Dorsolateral prefrontal cortex (tissue), 120 donors: ENCODE measurements at regions of chr16 and their contacts with region 1.

Region 1: DNA sequence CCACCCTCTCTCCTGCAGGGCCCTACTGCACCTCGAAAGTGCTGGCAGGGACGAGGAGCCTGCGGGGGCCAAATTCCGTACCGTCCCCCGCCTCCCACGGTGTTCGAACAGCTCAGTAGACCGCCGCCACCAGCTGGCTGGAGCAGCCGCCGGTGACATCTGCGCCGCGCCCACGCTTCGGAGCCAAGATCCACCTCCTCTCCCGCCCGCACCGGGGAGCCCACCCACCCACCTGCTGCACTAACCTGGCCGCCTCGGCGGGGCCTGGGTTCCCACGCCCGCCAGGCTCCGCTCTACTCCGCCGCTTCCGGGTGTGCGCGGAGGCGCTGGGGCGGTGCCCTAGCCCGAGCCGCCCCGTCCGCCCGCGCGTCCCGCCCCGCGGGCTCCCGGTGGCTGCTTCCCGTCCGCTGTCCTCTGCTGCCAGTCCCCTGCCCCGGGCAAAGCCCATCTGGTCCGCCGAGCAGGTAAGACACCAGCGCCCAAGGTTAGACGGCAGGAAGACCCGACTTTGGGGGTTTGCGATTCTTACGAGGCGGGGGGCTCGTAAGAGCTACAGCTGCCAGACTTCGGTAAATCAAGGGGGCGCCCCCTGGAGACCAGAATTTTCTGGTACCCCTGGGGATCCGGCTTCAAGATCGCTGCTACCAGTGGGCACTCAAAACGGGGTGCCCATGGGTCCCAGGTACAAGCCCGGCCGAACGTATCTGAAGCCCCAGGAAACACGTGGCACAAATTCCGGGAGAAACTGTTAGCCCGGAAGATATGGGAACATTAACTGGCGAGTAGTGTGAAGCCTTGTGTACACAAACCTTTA is at the starts of genes FBXL8 and TRADD:
- DNase-seq: peak in 2 of 10 donors; percentile 68 to 84
- H3K4me3 ChIP-seq: peak within 1 kb of the TSS; percentile 47 to 94 (median 82)
- H3K27ac ChIP-seq: peak within 1 kb of the TSS in 57 of 59 donors; percentile 1 to 88 (median 77)
- H3K27me3 ChIP-seq: peaks cover 0 to 11% (median 0%) of the 10 kb centered on the region in 45 donors
- CTCF ChIP-seq: peak in 48 of 56 donors; percentile 11 to 66 (median 38)
- total RNA-seq, gene FBXL8: 3.8 to 25.4 (median 10.2) TPM
- total RNA-seq, gene TRADD: 5.6 to 19.5 (median 11.5) TPM

Region 2: GRCh38 chr16:66947302-66948065 is 212.3 kb before region 1 on chr16:
- intact Hi-C with region 1: loop called in 1 of 2 experiments (anchors 5 kb)
- DNase-seq: peak; percentile 66 to 92 (median 80)
- H3K4me3 ChIP-seq: peak overlapping the region; percentile 41 to 75 (median 61)
- H3K27ac ChIP-seq: peak overlapping the region in 7 of 59 donors; percentile 4 to 71 (median 41)
- H3K27me3 ChIP-seq: no peaks in the 10 kb centered on the region
- CTCF ChIP-seq: peak; percentile 86 to 98 (median 94)

Region 3: GRCh38 chr16:66959704-66960161 is 200.1 kb before region 1 on chr16:
- intact Hi-C with region 1: loop called in 1 of 2 experiments (anchors 5 kb)
- DNase-seq: peak in 8 of 10 donors; percentile 18 to 78 (median 67)
- H3K4me3 ChIP-seq: no peak overlapping the region
- H3K27ac ChIP-seq: peak overlapping the region in 39 of 59 donors; percentile 7 to 74 (median 45)
- H3K27me3 ChIP-seq: no peaks in the 10 kb centered on the region
- CTCF ChIP-seq: no peak

Region 4: GRCh38 chr16:66977341-66978113 is 182.3 kb before region 1 on chr16:
- intact Hi-C with region 1: loop called (anchors 2 kb)
- DNase-seq: peak; percentile 84 to 95 (median 91)
- H3K4me3 ChIP-seq: peak overlapping the region in 1 of 59 donors; percentile 32
- H3K27ac ChIP-seq: peak overlapping the region in 15 of 59 donors; percentile 2 to 57 (median 37)
- H3K27me3 ChIP-seq: no peaks in the 10 kb centered on the region
- CTCF ChIP-seq: peak; percentile 80 to 100 (median 98)

Region 5: DNA sequence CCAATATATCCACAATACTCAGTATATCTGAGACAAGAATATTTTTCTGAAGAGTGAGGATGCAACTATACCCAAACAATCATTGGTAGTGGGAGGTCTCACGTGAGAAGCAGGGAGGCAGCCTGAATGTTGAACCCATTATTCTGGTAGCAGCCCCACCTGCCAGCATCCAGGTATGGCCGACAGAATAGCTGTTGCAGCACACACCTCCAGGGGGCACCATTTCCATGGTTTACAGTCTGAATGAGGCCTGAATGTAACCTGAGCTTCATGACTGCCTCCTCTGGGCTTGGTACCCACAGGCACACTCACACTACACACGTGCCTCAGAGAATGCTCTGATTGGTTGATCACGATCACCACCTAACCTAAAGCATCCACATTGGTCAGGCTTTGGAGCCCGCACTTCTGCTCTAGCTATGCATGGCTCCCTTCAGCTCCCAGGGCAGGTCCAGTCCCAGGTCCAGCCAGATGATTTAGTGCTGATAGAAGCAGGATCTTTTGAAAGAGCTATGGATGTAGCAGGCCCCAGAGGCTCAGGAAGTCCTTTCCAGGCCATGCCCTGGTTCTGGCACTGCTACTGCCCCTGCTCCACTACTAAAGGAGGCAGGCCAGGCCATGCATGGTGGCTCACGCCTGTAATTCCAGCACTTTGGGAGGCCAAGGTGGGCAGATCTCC is 141.9 kb before region 1 on chr16:
- intact Hi-C with region 1: loop called (anchors 5 kb)
- DNase-seq: peak; percentile 15 to 86 (median 64)
- H3K4me3 ChIP-seq: no peak overlapping the region
- H3K27ac ChIP-seq: peak overlapping the region in 7 of 59 donors; percentile 6 to 61 (median 34)
- H3K27me3 ChIP-seq: no peaks in the 10 kb centered on the region
- CTCF ChIP-seq: peak; percentile 54 to 89 (median 74)

Region 6: GRCh38 chr16:67109407-67110135 is 50.2 kb before region 1 on chr16 and contains the start of gene PHAF1:
- intact Hi-C with region 1: loop called (anchors 2 to 5 kb)
- DNase-seq: peak; percentile 87 to 98 (median 94)
- H3K4me3 ChIP-seq: peak within 1 kb of the TSS; percentile 43 to 100 (median 97)
- H3K27ac ChIP-seq: peak within 1 kb of the TSS; percentile 45 to 97 (median 90)
- H3K27me3 ChIP-seq: no peaks in the 10 kb centered on the region
- CTCF ChIP-seq: peak in 32 of 56 donors; percentile 3 to 54 (median 32)
- total RNA-seq, gene PHAF1: 19.1 to 43.4 (median 33.0) TPM